IMR-90 (cell line): ENCODE measurements at regions of chr18 and their contacts with region 1.

Region 1: DNA sequence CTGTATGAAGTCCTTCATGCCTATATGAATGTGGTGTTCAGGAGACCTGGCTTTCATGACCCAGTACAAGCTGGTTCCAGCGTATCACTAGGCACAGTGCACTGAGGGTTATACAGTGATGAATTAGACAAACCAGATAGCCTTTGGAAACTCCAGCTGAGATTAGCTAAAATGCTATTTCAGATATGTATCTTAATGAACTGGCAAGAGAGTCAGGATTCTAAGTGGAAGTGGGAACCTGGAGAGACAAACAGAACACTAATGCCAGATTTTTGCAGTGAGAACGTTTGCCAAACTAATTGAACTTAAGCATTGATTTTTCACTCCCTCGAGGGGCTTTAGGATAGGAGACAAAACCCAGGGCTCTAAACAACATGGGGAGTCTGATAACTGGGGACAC is 66.1 kb upstream of the EMILIN2 start:
- DNase-seq: no peak
- ATAC-seq: no peak
- H3K4me3 ChIP-seq: no peak overlapping the region
- H3K27ac ChIP-seq: no peak overlapping the region
- H3K4me1 ChIP-seq: no peaks in the 10 kb centered on the region
- H3K27me3 ChIP-seq: no peaks in the 10 kb centered on the region
- CTCF ChIP-seq: no peak
- POLR2A ChIP-seq: no peak
- RAD21 ChIP-seq: no peak

Region 2: GRCh38 chr18:2293109-2293839 is 487.5 kb before region 1 on chr18:
- CTCF ChIA-PET with region 1: no interaction called
- POLR2A ChIA-PET with region 1: no interaction called
- dilution Hi-C with region 1: no loop called
- in situ Hi-C with region 1: no loop called
- intact Hi-C with region 1: no loop called
- DNase-seq: no peak
- ATAC-seq: no peak
- H3K4me3 ChIP-seq: no peak overlapping the region
- H3K27ac ChIP-seq: no peak overlapping the region
- H3K4me1 ChIP-seq: no peaks in the 10 kb centered on the region
- H3K27me3 ChIP-seq: no peaks in the 10 kb centered on the region
- CTCF ChIP-seq: no peak
- POLR2A ChIP-seq: no peak
- RAD21 ChIP-seq: no peak

Region 3: DNA sequence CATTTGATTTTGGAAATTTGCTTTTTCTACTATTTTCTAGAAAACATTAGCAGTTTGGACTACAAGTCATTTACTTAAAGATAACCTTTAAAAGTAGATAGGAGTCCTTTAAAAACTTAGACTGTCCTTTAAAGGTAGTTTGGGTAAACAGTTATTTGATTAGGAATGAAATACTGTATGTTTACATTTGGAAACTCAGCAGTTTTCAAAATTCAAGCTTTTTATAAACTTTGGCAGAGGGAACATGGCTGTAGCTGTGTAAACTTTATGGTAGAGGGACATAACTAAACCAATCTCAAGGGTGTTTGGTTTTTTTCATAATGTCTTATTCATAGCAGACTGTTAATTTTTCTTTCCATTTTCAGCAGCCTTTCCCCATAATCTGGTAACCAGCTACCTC is 34.5 kb before region 1 on chr18:
- CTCF ChIA-PET with region 1: no interaction called
- POLR2A ChIA-PET with region 1: no interaction called
- dilution Hi-C with region 1: no loop called
- in situ Hi-C with region 1: no loop called
- intact Hi-C with region 1: loop called (anchors 5 kb)
- DNase-seq: no peak
- ATAC-seq: peak; percentile 67
- H3K4me3 ChIP-seq: no peak overlapping the region
- H3K27ac ChIP-seq: no peak overlapping the region
- H3K4me1 ChIP-seq: peaks cover 2% of the 10 kb centered on the region; the same call in 1 of the 2 replicates
- H3K27me3 ChIP-seq: no peaks in the 10 kb centered on the region
- CTCF ChIP-seq: no peak
- POLR2A ChIP-seq: no peak
- RAD21 ChIP-seq: no peak

Region 4: GRCh38 chr18:2948038-2948437 is 167.3 kb after region 1 on chr18:
- CTCF ChIA-PET with region 1: no interaction called
- POLR2A ChIA-PET with region 1: no interaction called
- dilution Hi-C with region 1: no loop called
- in situ Hi-C with region 1: no loop called
- intact Hi-C with region 1: no loop called
- DNase-seq: peak; percentile 58
- ATAC-seq: no peak; the same call in 1 of the 2 replicates
- H3K4me3 ChIP-seq: no peak overlapping the region
- H3K27ac ChIP-seq: no peak overlapping the region
- H3K4me1 ChIP-seq: peaks cover 2% of the 10 kb centered on the region
- H3K27me3 ChIP-seq: no peaks in the 10 kb centered on the region
- CTCF ChIP-seq: peak; percentile 50
- POLR2A ChIP-seq: no peak
- RAD21 ChIP-seq: peak; percentile 33